ENCODE measurements at regions of chr11 and their contacts with region 1.

Region 1: GRCh38 chr11:34546511-34547222 is 33.1 kb upstream of the ELF5 start:
- DNase-seq: peak in 7 of 10 donors; percentile 18 to 86 (median 54)

Region 2: DNA sequence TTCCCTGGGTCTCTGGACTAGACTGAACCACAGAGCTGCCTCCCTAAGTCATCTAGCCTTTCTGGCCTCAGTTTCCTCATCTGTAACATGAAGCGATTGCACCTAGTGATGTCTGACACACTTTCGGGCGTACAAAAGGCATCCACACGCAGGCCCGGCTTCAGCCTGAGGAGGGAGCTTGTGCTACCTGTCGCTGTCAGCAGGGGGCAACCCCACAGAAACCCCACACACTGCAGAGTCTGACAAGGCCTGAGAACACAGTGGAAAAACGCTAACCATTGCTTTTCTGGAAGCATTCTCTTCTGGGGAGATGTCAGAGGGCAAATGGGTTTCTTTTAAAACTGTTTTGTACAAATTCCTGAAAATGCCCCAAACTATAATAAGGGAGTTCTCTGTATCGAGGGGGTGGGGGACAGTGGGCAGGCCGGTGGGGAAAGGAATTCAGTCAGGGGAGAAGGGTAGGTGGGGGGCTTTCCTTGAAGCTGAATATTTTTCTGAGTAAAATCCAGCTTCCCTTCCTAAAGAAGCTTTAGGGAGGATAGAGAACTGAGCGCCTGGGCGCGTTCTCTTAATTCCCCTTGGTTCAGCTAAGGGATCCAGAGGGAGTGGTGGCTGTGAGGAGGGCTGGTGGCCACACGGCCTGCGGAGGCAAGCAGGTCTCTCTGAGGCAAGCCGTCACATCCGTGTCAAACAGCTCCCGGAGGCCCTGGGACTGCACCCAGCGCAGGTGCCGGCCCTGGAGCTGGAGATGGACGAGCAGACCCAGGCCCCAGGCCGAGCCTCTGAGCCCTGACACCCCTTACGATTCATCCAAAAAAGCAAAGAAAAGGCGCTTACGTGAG is 33.6 kb before region 1 on chr11:
- intact Hi-C with region 1: loop called (anchors 5 kb)
- DNase-seq: peak in 7 of 10 donors; percentile 34 to 92 (median 59)

Region 3: GRCh38 chr11:34525887-34526636 is 20.6 kb before region 1 on chr11:
- intact Hi-C with region 1: no loop called
- DNase-seq: no peak

Region 4: DNA sequence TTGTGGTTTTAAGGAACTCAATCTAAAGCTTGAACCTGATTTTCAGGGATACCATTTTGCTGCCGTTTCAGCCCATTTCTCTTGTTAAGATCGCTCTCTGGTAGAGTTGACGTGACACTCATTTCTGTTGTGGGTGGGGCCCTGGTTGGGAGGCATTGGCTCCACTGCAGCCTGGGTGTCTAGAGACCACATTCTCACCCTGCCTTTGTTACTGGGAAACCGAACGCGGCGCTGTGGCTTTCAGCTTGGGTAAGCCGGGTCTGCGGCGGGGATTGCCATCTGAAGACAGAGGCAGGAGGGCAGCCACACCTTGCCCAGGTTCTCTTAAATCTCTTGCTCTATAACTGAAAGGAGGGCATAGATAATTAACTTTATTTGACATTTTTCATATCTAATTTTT is 77.4 kb after region 1 on chr11:
- intact Hi-C with region 1: no loop called
- DNase-seq: no peak

Measured in posterior cingulate gyrus (tissue), 11 donors.